ENCODE measurements at regions of chr16 and their contacts with region 1.

Region 1: DNA sequence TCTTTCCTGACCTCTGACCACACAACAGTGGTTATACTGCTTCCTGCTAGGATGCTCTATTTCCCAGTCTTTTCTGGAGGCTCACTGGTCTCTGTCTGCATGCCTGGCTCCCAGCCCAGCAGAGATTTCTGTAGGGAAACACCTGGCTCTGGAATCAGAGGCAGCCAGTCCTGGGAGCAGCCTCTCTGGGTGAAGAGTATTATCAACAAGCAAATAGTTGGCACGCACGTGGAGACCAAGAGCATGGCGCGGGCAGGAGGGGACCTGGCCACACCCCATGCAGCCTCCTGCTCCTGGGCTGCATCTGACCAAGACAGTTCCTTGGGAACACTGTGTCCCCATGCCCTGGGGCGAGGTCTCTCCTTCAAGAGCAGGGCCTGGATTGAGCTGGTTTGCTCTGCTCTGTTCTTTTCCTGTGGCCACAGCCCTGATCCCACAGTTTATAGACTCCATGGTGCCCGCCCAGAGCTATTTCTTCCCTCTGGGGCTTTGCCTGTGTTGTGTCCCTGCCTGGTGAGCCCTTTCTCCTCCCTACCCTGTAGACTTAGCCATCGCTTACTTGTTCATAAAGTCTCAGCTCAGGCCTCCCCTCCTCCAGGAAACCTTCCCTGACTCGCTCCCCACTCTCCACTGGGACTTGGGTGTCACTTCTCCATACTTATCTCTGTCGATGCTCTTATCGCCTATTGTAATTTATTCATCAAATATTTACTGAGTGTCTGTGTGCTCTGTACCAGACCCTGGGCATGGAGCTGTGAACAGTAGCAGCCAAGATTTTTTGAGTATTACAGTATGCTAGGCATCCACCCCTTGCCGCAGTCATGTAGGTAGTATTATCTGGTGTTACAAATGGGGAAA is 60.6 kb downstream of the SCNN1B start:
- DNase-seq: no peak
- H3K4me3 ChIP-seq: no peak overlapping the region
- H3K27ac ChIP-seq: no peak overlapping the region
- H3K4me1 ChIP-seq: 0 out of 7 replicates have a peak, but pooled peaks cover 0 to 2% (median 0%) of the 10 kb centered on the region in 4 experiments
- H3K27me3 ChIP-seq: no peaks in the 10 kb centered on the region
- CTCF ChIP-seq: no peak
- EP300 ChIP-seq: no peak
- POLR2A ChIP-seq: no peak
- RAD21 ChIP-seq: no peak

Region 2: GRCh38 chr16:23324730-23325129 is 38.0 kb before region 1 on chr16:
- CTCF ChIA-PET with region 1: no interaction called
- POLR2A ChIA-PET with region 1: no interaction called
- DNase-seq: no peak
- H3K4me3 ChIP-seq: no peak overlapping the region
- H3K27ac ChIP-seq: no peak overlapping the region
- H3K4me1 ChIP-seq: no peaks in the 10 kb centered on the region
- H3K27me3 ChIP-seq: no peaks in the 10 kb centered on the region
- CTCF ChIP-seq: no peak
- EP300 ChIP-seq: no peak
- POLR2A ChIP-seq: no peak
- RAD21 ChIP-seq: no peak

Region 3: GRCh38 chr16:23348579-23349469 is 13.9 kb before region 1 on chr16:
- CTCF ChIA-PET with region 1: interaction called, 11 read pairs
- POLR2A ChIA-PET with region 1: interaction called, 4 read pairs
- DNase-seq: peak; percentile 59 to 61
- H3K4me3 ChIP-seq: no peak overlapping the region
- H3K27ac ChIP-seq: no peak overlapping the region
- H3K4me1 ChIP-seq: peaks cover 0 to 4% (median under 1%) of the 10 kb centered on the region in 4 experiments; a peak in 3 of 7 replicates
- H3K27me3 ChIP-seq: no peaks in the 10 kb centered on the region
- CTCF ChIP-seq: peak; percentile 48 to 74 (median 62)
- EP300 ChIP-seq: no peak
- POLR2A ChIP-seq: no peak
- RAD21 ChIP-seq: peak; percentile 44 to 52; a peak in 3 of 4 replicates

Measured in H1 (cell line).